AG04450 (cell line): ENCODE measurements at regions of chr6 and their contacts with region 1.

Region 1: GRCh38 chr6:155041741-155042279 is 46.7 kb downstream of the TIAM2 start:
- DNase-seq: no peak
- H3K4me3 ChIP-seq: no peak overlapping the region
- H3K27ac ChIP-seq: no peak overlapping the region
- H3K27me3 ChIP-seq: peaks cover 2% of the 10 kb centered on the region
- CTCF ChIP-seq: no peak

Region 2: GRCh38 chr6:154733626-154734382 is 308.0 kb before region 1 on chr6:
- CTCF ChIA-PET with region 1: no interaction called
- POLR2A ChIA-PET with region 1: no interaction called
- DNase-seq: peak; percentile 87
- H3K4me3 ChIP-seq: peak overlapping the region; percentile 82
- H3K27ac ChIP-seq: peak overlapping the region; percentile 96
- H3K27me3 ChIP-seq: no peaks in the 10 kb centered on the region
- CTCF ChIP-seq: no peak

Region 3: DNA sequence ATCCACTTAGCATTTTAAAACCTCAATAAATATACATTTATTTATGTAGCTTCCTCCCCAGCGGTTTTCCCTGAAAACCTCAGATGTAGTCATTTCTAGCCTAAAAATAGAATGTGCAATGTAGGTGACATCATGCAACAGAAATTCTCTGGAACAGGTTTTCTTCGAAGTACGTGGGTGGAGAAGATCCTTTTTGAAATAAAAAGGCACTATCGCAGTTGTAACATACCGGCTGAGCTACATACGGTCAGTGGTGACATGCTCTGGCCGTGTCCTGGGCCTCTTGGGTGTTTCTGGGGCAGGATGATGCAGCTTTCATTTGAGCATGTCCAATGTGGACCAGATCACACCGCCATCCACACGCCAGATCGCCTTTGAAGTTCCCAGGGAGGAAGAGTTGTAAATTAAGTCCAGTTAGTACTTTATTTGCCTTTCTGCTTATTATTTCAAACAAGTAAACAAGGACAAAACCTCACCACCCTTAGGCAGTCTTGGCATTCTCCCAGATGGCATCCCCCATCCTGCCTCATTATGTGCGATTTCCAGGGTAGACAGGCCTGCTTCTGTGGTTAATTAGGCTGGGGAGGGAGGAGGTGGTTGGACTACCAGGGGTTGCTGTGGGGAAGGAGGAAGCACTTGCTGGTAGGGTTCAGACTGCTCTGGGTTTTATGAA is 112.5 kb after region 1 on chr6:
- CTCF ChIA-PET with region 1: no interaction called
- POLR2A ChIA-PET with region 1: interaction called, 13 read pairs
- DNase-seq: peak; percentile 78
- H3K4me3 ChIP-seq: no peak overlapping the region
- H3K27ac ChIP-seq: peak overlapping the region; percentile 91
- H3K27me3 ChIP-seq: no peaks in the 10 kb centered on the region
- CTCF ChIP-seq: no peak